Activated CD4-positive, alpha-beta memory T cell treated with anti-CD3 and anti-CD28 coated beads for 36 hours (primary cell): ENCODE measurements at regions of chr2 and their contacts with region 1.

Region 1: GRCh38 chr2:108938077-108938710 is 50.8 kb downstream of the EDAR start:
- DNase-seq: peak; percentile 28
- H3K4me3 Mint-ChIP-seq: peak overlapping the region; percentile 2
- H3K27ac Mint-ChIP-seq: no peak overlapping the region
- H3K4me1 Mint-ChIP-seq: peaks cover 20% of the 10 kb centered on the region
- H3K27me3 Mint-ChIP-seq: no peaks in the 10 kb centered on the region

Region 2: DNA sequence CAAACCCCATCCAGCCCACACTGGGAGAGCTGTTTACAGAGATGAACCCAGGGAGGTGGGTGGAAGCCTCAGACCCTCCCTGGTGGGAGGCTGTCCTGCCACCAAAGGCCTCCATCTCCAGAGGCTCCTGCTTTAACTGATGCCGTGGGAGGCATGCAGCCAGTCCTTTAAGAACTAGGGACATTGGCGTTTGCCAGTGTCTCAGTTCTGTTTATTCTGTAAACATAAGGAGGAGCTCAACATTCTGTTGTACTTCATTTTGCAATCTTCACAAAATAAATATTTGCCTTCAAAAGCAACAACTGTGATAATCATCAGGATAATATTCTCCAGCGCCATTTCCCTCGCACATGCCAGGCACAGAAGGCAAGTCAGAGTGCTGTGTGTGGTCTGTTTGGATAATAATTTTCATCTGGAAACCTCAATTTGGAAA is 44.1 kb after region 1 on chr2:
- CTCF ChIA-PET with region 1: no interaction called
- POLR2A ChIA-PET with region 1: no interaction called
- intact Hi-C with region 1: loop called (anchors 5 kb)
- DNase-seq: no peak
- H3K4me3 Mint-ChIP-seq: no peak overlapping the region
- H3K27ac Mint-ChIP-seq: no peak overlapping the region
- H3K4me1 Mint-ChIP-seq: peaks cover 34% of the 10 kb centered on the region
- H3K27me3 Mint-ChIP-seq: no peaks in the 10 kb centered on the region

Region 3: GRCh38 chr2:109356324-109357035 is 418.3 kb after region 1 on chr2:
- CTCF ChIA-PET with region 1: no interaction called
- POLR2A ChIA-PET with region 1: no interaction called
- intact Hi-C with region 1: no loop called
- DNase-seq: no peak
- H3K4me3 Mint-ChIP-seq: no peak overlapping the region
- H3K27ac Mint-ChIP-seq: no peak overlapping the region
- H3K4me1 Mint-ChIP-seq: peaks cover 2% of the 10 kb centered on the region
- H3K27me3 Mint-ChIP-seq: peaks cover 2% of the 10 kb centered on the region